ENCODE measurements at regions of chr2 and their contacts with region 1.

Region 1: GRCh38 chr2:162118559-162119031 is 33.5 kb downstream of the GCG start:
- DNase-seq: no peak
- ATAC-seq: peak; percentile 83
- H3K4me3 ChIP-seq: no peak overlapping the region
- H3K27ac ChIP-seq: peak overlapping the region; percentile 60 to 69
- H3K4me1 ChIP-seq: peaks cover 10 to 16% of the 10 kb centered on the region in 2 donors
- H3K27me3 ChIP-seq: no peaks in the 10 kb centered on the region
- CTCF ChIP-seq: no peak

Region 2: GRCh38 chr2:161480123-161480522 is 638.5 kb before region 1 on chr2:
- intact Hi-C with region 1: no loop called
- DNase-seq: peak in 1 of 4 donors; percentile 47
- ATAC-seq: no peak
- H3K4me3 ChIP-seq: no peak overlapping the region
- H3K27ac ChIP-seq: no peak overlapping the region
- H3K4me1 ChIP-seq: no peaks in the 10 kb centered on the region
- H3K27me3 ChIP-seq: no peaks in the 10 kb centered on the region
- CTCF ChIP-seq: no peak

Region 3: DNA sequence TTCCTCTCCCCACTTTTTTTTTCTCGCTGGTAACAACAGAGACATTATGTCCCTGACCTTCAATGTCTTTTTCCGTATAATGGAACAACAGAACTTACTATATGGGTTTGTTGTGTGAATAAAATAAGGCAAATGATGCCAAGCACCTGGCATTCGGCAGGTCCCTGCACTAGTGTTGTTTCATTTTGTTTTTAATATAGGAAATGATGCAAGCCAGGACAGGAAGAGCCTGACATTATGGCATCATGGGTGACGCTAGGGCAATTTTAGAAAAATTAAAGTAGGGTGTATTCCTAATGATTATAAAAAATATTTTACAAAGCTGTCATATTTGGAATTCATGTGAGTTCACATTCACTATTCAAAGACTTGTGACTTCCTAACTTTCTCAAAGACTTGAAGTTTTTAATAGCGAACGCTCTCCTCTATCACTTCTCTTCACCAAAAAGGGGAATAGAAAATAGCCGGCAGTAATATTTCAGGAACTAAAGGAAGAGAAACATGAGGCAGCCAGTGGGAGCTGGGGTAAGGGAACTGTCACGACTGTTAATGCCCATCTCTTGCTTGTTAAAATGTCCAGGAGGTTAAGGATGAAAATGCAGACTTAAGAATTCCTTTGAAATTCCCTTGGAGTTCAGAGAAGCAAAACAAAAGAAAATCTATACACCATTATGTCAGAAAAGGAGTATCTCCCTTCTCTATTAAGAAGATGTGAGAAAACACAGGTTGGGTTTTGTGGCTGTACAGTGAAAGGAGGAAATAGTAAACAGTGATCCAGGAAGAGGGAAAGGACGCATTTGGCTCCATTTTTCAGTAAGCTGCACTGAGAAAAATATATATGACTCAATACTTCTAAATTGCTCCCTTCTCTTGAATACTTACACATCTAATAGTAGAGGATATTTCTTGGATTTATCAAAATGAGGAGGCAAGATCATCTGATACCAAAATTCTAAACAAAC is 104.8 kb before region 1 on chr2:
- intact Hi-C with region 1: loop called (anchors 5 to 10 kb)
- DNase-seq: no peak
- ATAC-seq: peak; percentile 28
- H3K4me3 ChIP-seq: no peak overlapping the region
- H3K27ac ChIP-seq: peak overlapping the region; percentile 35 to 48
- H3K4me1 ChIP-seq: peaks cover 0 to 7% of the 10 kb centered on the region in 2 donors
- H3K27me3 ChIP-seq: no peaks in the 10 kb centered on the region
- CTCF ChIP-seq: no peak

Measured in left lung (tissue), 14 donors.